ENCODE measurements at regions of chr22 and their contacts with region 1.

Region 1: GRCh38 chr22:33920927-33921524 is 750 bp upstream of the LARGE1 start:
- DNase-seq: peak; percentile 51 to 85
- ATAC-seq: peak; percentile 85 to 92
- H3K4me3 ChIP-seq: peak overlapping the region; percentile 66
- H3K27ac ChIP-seq: peak overlapping the region; percentile 68 to 91
- H3K4me1 ChIP-seq: peaks cover 9% of the 10 kb centered on the region; the same call in 2 of the 3 replicates
- CTCF ChIP-seq: no peak
- EP300 ChIP-seq: no peak
- POLR2A ChIP-seq: peak; percentile 73
- RAD21 ChIP-seq: no peak

Region 2: GRCh38 chr22:33909075-33909458 is 12.0 kb before region 1 on chr22:
- CTCF ChIA-PET with region 1: interaction called, 18 read pairs
- POLR2A ChIA-PET with region 1: no interaction called
- DNase-seq: peak in 1 of 2 experiments; percentile 12
- ATAC-seq: no peak
- H3K4me3 ChIP-seq: no peak overlapping the region
- H3K27ac ChIP-seq: no peak overlapping the region
- H3K4me1 ChIP-seq: peaks cover 4% of the 10 kb centered on the region; the same call in 1 of the 3 replicates
- CTCF ChIP-seq: no peak
- EP300 ChIP-seq: no peak
- POLR2A ChIP-seq: no peak
- RAD21 ChIP-seq: no peak

Region 3: DNA sequence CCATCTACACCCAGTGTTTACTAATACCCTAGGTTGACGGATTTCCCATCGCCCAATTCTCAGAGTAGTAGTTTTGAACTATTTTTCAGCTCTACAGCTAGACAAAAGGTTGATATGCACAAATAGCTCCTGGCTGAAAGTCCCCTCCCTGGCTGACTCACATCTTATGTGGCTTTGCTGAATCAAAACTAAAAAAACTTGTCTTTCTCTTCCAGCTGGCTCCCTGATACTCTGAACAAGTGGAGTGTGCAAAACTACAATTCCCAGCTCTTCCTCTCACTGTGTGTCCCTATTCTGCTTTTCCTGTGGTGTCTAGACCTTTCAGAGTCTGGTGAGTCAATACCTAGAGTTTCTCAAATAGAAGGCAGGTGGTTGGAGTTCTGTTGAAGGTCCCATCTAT is 12.0 kb after region 1 on chr22:
- CTCF ChIA-PET with region 1: interaction called, 10 read pairs
- POLR2A ChIA-PET with region 1: no interaction called
- DNase-seq: no peak
- ATAC-seq: no peak
- H3K4me3 ChIP-seq: no peak overlapping the region
- H3K27ac ChIP-seq: no peak overlapping the region
- H3K4me1 ChIP-seq: no peaks in the 10 kb centered on the region
- CTCF ChIP-seq: no peak
- EP300 ChIP-seq: no peak
- POLR2A ChIP-seq: no peak
- RAD21 ChIP-seq: no peak